Activated CD8-positive, alpha-beta T cell treated with anti-CD3 and anti-CD28 coated beads, Interleukin-2, amount 10 ng/mL, durations not matched to agents 7 days and 5 days (primary cell): ENCODE measurements at regions of chr19 and their contacts with region 1.

Region 1: DNA sequence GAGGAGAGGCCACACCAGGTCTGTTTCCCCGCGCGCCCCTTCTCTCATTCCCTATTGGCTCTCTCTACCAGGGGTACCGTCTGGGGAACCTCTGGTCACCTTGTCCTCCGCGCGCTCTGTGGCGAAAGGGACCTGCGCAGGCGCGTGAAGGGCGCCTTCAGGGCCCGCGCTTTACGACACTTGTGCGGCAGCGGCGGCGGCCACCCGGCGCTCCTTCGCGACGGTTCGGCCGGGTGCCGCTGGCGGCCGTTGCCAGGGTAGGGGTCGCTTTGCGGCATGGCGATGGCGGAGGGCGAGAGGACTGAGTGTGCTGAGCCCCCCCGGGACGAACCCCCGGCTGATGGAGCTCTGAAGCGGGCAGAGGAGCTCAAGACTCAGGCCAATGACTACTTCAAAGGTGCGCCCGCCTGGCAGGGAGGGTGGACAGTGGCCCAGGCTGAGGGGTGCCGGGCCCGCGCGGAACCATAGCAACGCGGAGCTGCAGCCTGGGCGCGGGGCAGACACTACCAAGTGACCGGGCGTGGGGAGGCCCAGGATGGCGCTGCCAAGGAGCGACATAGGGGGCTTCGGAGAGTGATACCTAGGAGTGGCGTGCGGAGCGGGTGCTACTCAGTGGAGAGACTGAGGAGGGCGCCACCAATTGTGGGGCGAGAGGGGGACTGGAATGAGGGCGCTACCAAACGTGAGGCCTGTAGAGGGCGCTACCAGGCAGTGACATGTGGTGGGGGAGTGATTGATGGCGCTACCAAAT is at the start of gene PPP5C:
- DNase-seq: peak; percentile 92
- ATAC-seq: peak; percentile 69
- H3K4me3 Mint-ChIP-seq: peak within 1 kb of the TSS; percentile 95
- H3K27ac Mint-ChIP-seq: peak within 1 kb of the TSS; percentile 83
- H3K4me1 Mint-ChIP-seq: peaks cover 51% of the 10 kb centered on the region
- H3K27me3 Mint-ChIP-seq: peaks cover 20% of the 10 kb centered on the region
- total RNA-seq, gene PPP5C: 118 to 126 TPM

Region 2: GRCh38 chr19:46372901-46373420 is 26.0 kb after region 1 on chr19:
- CTCF ChIA-PET with region 1: interaction called, 10 read pairs
- POLR2A ChIA-PET with region 1: interaction called, 3 read pairs
- DNase-seq: no peak
- ATAC-seq: no peak
- H3K4me3 Mint-ChIP-seq: no peak overlapping the region
- H3K27ac Mint-ChIP-seq: no peak overlapping the region
- H3K4me1 Mint-ChIP-seq: peaks cover 16% of the 10 kb centered on the region
- H3K27me3 Mint-ChIP-seq: no peaks in the 10 kb centered on the region

Region 3: GRCh38 chr19:46493236-46494145 is 146.5 kb after region 1 on chr19:
- CTCF ChIA-PET with region 1: no interaction called
- POLR2A ChIA-PET with region 1: no interaction called
- DNase-seq: peak; percentile 48
- ATAC-seq: peak; percentile 37
- H3K4me3 Mint-ChIP-seq: peak overlapping the region; percentile 61
- H3K27ac Mint-ChIP-seq: no peak overlapping the region
- H3K4me1 Mint-ChIP-seq: peaks cover 21% of the 10 kb centered on the region
- H3K27me3 Mint-ChIP-seq: peaks cover 66% of the 10 kb centered on the region